ENCODE measurements at regions of chr9 and their contacts with region 1.

Region 1: GRCh38 chr9:27726244-27727081 is 153.2 kb upstream of the C9orf72 start:
- DNase-seq: peak in 2 of 3 donors; percentile 38 to 64
- ATAC-seq: peak; percentile 88 to 94 (median 90)
- H3K4me3 ChIP-seq: no peak overlapping the region
- H3K27ac ChIP-seq: no peak overlapping the region
- H3K4me1 ChIP-seq: no peaks in the 10 kb centered on the region
- H3K27me3 ChIP-seq: no peaks in the 10 kb centered on the region
- CTCF ChIP-seq: peak; percentile 76 to 95 (median 87)
- POLR2A ChIP-seq: no peak

Region 2: GRCh38 chr9:27888661-27889295 is 162.3 kb after region 1 on chr9:
- intact Hi-C with region 1: loop called in 1 of 2 experiments (anchors 10 kb)
- DNase-seq: peak in 2 of 3 donors; percentile 51 to 56
- ATAC-seq: peak; percentile 66 to 91 (median 84)
- H3K4me3 ChIP-seq: no peak overlapping the region
- H3K27ac ChIP-seq: no peak overlapping the region
- H3K4me1 ChIP-seq: no peaks in the 10 kb centered on the region
- H3K27me3 ChIP-seq: no peaks in the 10 kb centered on the region
- CTCF ChIP-seq: peak; percentile 49 to 83 (median 76)
- POLR2A ChIP-seq: no peak

Region 3: GRCh38 chr9:28073270-28073669 is 346.8 kb after region 1 on chr9:
- intact Hi-C with region 1: loop called in 1 of 2 experiments (anchors 5 kb)
- DNase-seq: peak in 1 of 3 donors; percentile 50
- ATAC-seq: peak; percentile 68 to 86 (median 76)
- H3K4me3 ChIP-seq: no peak overlapping the region
- H3K27ac ChIP-seq: no peak overlapping the region
- H3K4me1 ChIP-seq: no peaks in the 10 kb centered on the region
- H3K27me3 ChIP-seq: no peaks in the 10 kb centered on the region
- CTCF ChIP-seq: peak; percentile 53 to 77 (median 66)
- POLR2A ChIP-seq: no peak